ENCODE measurements at regions of chr22 and their contacts with region 1.

Region 1: GRCh38 chr22:29603358-29604075 is at the start of gene NF2:
- DNase-seq: peak; percentile 98 to 99
- ATAC-seq: peak; percentile 99 to 100 (median 100)
- H3K4me3 ChIP-seq: peak within 1 kb of the TSS; percentile 67 to 99 (median 92)
- H3K27ac ChIP-seq: peak within 1 kb of the TSS; percentile 55 to 98 (median 95)
- H3K4me1 ChIP-seq: peaks cover 0 to 28% (median 19%) of the 10 kb centered on the region in 9 donors
- H3K27me3 ChIP-seq: no peaks in the 10 kb centered on the region
- CTCF ChIP-seq: peak in 5 of 9 donors; percentile 5 to 31 (median 21)
- total RNA-seq, gene NF2: 39.2 to 59.4 (median 45.9) TPM

Region 2: GRCh38 chr22:29457730-29458129 is 145.8 kb before region 1 on chr22:
- intact Hi-C with region 1: no loop called
- DNase-seq: no peak
- ATAC-seq: peak in 6 of 8 donors; percentile 45 to 69 (median 59)
- H3K4me3 ChIP-seq: no peak overlapping the region
- H3K27ac ChIP-seq: no peak overlapping the region
- H3K4me1 ChIP-seq: peaks cover 0 to 4% (median 0%) of the 10 kb centered on the region in 9 donors
- H3K27me3 ChIP-seq: no peaks in the 10 kb centered on the region
- CTCF ChIP-seq: no peak

Region 3: GRCh38 chr22:29625090-29625825 is 21.7 kb after region 1 on chr22:
- intact Hi-C with region 1: loop called in 1 of 10 experiments (anchors 2 kb)
- DNase-seq: no peak
- ATAC-seq: peak in 4 of 8 donors; percentile 61 to 71 (median 64)
- H3K4me3 ChIP-seq: no peak overlapping the region
- H3K27ac ChIP-seq: no peak overlapping the region
- H3K4me1 ChIP-seq: peaks cover 0 to 60% (median 36%) of the 10 kb centered on the region in 9 donors
- H3K27me3 ChIP-seq: no peaks in the 10 kb centered on the region
- CTCF ChIP-seq: peak; percentile 65 to 91 (median 83)

Region 4: DNA sequence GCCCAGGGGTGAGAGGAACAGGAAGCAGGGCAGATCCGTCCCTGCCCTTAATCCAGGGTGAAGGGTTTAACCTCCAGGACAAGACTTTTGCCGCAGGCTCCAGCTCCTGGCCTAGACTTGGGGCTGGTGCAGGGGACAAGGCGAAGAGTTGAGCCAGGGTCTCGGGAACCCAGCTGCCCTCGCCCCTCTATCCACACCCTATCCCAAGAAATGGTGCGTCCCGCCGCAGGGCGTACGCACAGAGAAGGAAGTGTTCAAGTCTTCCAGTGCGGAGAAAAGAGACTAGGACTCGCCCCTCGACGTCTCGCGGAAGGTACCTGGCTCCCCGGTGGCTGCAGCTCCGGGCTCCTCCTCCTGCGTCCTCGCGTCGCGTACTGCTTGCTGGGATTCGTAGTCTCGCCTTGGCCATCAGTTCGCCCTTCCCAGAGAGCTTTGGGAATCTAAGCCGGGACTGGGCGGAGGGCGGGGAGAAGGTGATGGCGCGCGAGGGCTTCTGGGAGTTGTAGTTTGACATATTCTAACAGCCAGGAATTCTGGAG is 163.2 kb after region 1 on chr22 and contains the start of gene ZMAT5:
- intact Hi-C with region 1: loop called in 1 of 10 experiments (anchors 10 kb)
- DNase-seq: peak; percentile 91 to 95
- ATAC-seq: peak; percentile 96 to 99 (median 99)
- H3K4me3 ChIP-seq: peak within 1 kb of the TSS; percentile 54 to 97 (median 86)
- H3K27ac ChIP-seq: peak within 1 kb of the TSS; percentile 89 to 97 (median 94)
- H3K4me1 ChIP-seq: peaks cover 6 to 45% (median 31%) of the 10 kb centered on the region in 9 donors
- H3K27me3 ChIP-seq: no peaks in the 10 kb centered on the region
- CTCF ChIP-seq: no peak
- total RNA-seq, gene ZMAT5: 15.1 to 23.9 (median 19.3) TPM